ENCODE measurements at regions of chrX and their contacts with region 1.

Region 1: DNA sequence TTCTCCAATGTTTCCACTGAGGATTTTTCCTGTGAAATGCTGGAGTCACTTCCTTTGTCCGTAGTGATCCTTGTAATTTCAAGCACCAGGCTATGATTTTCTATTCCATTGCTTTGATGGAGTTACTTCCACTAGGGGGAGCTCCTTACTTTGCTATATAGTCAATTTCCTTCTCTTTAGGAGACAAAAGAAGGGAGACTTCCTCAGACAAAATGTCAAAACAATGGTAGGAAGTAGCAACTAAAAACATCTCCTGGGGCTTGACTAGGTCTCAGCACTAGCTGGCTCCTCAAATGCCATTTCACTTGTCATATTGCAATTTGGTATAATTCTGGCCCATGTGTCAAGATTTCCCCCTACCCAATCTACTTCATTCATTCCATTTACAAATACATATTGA is 24.1 kb downstream of the ZCCHC12 start:
- DNase-seq: no peak

Region 2: GRCh38 chrX:119004920-119005524 is 157.3 kb after region 1 on chrX:
- intact Hi-C with region 1: loop called (anchors 5 kb)
- DNase-seq: peak in 7 of 10 donors; percentile 19 to 92 (median 48)

Region 3: GRCh38 chrX:119067023-119067739 is 219.5 kb after region 1 on chrX:
- intact Hi-C with region 1: loop called (anchors 2 kb)
- DNase-seq: peak in 7 of 10 donors; percentile 29 to 91 (median 54)